ENCODE measurements at regions of chr2 and their contacts with region 1.

Region 1: DNA sequence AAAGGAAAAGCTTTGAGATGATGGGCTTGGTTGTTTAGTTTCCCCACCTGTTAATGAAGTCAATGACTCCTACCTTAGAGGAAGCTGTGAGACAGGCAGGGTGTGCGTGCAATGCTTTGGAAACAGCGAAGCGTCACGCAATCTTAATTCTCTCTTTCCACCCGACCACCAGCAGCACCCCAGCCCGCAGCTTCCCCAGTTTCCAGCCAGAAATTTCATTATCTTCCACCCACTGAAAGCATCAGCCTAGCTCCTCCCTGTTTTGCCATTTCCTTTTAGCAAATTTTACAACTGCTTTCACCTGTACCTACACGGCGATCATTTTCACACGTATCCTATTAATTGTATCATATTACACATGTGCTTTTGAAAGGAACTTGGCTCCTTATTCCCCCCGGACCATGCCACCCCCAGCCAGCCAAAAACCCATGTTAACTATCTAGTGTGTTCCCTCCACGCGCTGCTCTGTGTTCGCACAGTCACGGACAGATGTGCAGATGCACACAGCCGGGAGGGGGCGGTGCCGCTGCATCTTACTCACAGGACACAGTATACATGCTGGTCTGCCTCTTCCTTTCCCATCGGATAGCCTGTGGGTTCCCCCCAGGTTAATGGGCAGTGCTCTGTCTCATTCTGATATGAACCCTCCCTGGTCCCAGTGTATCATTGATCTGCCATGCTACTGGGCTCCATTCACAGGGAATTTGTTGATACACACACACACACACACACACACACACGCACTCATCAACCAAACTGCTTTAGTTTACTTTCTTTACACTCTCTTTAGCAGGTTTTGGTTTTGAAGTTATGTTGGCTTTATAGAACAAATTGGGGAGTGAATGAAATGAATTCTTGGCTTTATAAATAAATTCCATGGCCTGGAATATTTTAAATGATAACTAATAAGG is 22.4 kb downstream of the CYP27C1 start:
- DNase-seq: peak; percentile 85
- ATAC-seq: peak; percentile 100
- H3K4me3 ChIP-seq: peak overlapping the region; percentile 65
- H3K27ac ChIP-seq: no peak overlapping the region
- H3K4me1 ChIP-seq: no peaks in the 10 kb centered on the region
- H3K27me3 ChIP-seq: no peaks in the 10 kb centered on the region
- CTCF ChIP-seq: peak; percentile 95

Region 2: DNA sequence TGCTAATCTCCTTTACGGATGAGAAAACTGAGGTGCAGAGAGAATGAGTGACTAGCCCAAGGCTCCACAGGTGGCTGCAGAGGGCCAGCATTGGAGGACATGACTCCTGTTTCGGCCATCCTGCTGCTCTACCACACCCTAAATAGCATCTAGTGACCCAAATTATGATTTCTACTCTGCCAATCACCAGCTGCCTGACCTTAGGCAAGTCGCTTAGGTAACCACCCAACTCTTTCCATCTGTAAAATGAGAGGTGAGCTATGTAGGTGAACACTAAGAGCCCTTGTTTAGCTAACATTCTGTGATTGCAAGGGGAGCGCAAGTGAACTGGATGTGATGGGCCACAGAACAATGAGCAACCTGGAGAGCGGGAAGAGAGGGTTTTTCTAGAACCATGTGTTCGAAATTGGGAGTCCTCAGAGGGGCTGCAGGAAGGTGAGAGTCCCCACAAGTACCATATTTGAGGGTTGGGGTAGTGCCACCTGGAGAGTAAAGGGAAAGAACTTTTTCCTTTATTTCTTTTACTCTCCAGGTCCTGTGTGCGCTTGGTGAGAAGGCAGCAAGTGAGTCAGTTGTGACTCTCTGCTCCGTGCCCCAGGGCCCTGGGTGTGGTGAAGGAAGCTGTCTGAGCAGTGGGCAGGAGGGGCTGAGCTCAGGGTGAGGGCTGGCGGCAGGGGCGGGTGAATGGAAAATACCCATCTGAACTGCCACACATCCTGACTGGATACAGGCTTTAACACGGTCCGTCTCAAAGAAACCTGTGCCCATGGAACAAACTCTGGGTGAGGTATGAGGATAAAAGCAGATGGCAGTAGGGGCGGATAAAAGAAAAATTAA is 20.0 kb after region 1 on chr2:
- CTCF ChIA-PET with region 1: interaction called, 23 read pairs
- POLR2A ChIA-PET with region 1: no interaction called
- intact Hi-C with region 1: no loop called
- DNase-seq: peak; percentile 95
- ATAC-seq: peak; percentile 96
- H3K4me3 ChIP-seq: peak overlapping the region; percentile 69
- H3K27ac ChIP-seq: peak overlapping the region; percentile 99
- H3K4me1 ChIP-seq: peaks cover 32% of the 10 kb centered on the region
- H3K27me3 ChIP-seq: no peaks in the 10 kb centered on the region
- CTCF ChIP-seq: no peak

Region 3: DNA sequence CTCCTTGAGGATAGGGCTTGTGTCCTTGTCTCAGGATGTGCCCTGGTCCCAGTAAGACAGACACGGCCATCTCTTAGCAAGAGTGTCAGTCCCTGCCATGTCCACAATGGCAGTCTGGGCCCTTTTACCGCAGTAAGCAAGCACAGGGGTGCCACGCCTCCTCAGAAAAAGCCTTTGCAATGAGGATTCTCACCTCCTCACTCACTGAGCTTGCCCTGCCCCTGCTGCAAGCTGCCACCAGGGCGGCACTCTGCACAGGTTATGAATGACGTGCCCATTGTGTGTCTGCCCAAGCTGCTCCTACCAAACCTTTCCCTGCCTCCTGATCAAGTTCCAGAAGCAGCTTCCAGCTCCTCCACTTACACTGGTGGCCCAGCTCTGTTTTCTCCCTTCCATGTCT is 72.9 kb after region 1 on chr2:
- CTCF ChIA-PET with region 1: interaction called, 10 read pairs
- POLR2A ChIA-PET with region 1: no interaction called
- intact Hi-C with region 1: no loop called
- DNase-seq: no peak
- ATAC-seq: no peak
- H3K4me3 ChIP-seq: no peak overlapping the region
- H3K27ac ChIP-seq: no peak overlapping the region
- H3K4me1 ChIP-seq: no peaks in the 10 kb centered on the region
- H3K27me3 ChIP-seq: no peaks in the 10 kb centered on the region
- CTCF ChIP-seq: peak; percentile 59

Region 4: DNA sequence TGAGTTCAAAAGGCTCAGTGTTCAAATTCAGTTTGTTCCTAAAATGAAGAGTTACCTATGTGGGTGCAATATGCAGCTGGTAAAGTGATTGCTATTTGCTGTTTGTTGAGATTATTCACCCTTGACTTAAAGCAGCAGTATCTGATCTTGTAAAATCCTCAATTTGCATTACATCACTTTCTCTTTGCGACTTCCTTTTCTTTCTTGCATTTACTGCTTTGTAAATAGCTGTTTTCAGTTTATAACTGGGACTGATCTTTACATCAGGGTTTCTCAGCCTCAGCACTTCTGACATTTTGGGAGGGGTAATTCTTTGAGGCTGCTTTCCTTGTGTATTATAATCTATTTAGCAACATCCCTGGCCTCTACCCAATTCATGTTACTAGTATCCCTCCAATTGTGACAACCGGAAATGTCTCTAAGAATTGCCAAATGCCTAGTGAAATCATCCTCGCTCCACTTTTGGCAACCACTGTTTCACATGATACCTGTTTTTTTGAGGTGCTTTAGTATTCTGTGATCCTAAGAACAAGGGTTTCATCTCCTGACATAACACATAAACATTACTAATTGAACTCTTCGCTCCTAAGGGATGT is 108.4 kb after region 1 on chr2:
- CTCF ChIA-PET with region 1: interaction called, 5 read pairs
- POLR2A ChIA-PET with region 1: no interaction called
- intact Hi-C with region 1: loop called (anchors 10 kb)
- DNase-seq: peak; percentile 11
- ATAC-seq: peak; percentile 77
- H3K4me3 ChIP-seq: no peak overlapping the region
- H3K27ac ChIP-seq: no peak overlapping the region
- H3K4me1 ChIP-seq: 0 out of 2 replicates have a peak, but pooled peaks cover 5% of the 10 kb centered on the region
- H3K27me3 ChIP-seq: no peaks in the 10 kb centered on the region
- CTCF ChIP-seq: no peak

Region 5: DNA sequence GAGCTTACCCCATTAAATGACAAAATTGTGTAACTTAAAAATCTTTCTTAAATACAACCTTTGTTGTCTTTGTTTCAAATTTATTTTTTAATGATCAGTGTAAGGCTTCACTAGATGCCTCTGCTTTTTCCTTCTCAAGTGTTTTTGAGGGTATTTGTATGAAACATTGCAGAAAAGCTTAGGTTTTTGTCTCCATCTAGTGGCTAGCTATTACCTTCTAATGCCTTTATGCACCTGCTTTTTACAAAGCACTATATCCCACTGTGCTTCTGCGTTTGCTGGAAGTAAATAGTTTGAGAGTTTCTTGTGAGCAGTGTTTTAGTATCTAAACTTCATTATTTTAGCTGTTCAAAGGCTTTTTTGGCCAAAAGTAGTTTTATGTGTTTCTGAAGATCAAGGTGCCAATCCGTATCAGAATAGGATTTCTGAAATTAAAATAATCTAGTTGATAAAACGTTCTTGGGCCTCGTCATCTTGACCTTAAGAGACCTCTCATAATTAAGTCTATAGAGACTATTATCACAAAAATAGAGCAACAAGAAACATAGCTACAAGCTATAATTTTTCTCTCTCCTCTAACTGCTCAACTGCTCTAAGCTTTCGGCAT is 281.6 kb after region 1 on chr2:
- CTCF ChIA-PET with region 1: interaction called, 13 read pairs
- POLR2A ChIA-PET with region 1: no interaction called
- intact Hi-C with region 1: loop called (anchors 2 kb)
- DNase-seq: peak; percentile 75
- ATAC-seq: peak; percentile 83
- H3K4me3 ChIP-seq: no peak overlapping the region
- H3K27ac ChIP-seq: no peak overlapping the region
- H3K4me1 ChIP-seq: no peaks in the 10 kb centered on the region
- H3K27me3 ChIP-seq: no peaks in the 10 kb centered on the region
- CTCF ChIP-seq: peak; percentile 90